Caco-2 (cell line): ENCODE measurements at regions of chr15 and their contacts with region 1.

Region 1: DNA sequence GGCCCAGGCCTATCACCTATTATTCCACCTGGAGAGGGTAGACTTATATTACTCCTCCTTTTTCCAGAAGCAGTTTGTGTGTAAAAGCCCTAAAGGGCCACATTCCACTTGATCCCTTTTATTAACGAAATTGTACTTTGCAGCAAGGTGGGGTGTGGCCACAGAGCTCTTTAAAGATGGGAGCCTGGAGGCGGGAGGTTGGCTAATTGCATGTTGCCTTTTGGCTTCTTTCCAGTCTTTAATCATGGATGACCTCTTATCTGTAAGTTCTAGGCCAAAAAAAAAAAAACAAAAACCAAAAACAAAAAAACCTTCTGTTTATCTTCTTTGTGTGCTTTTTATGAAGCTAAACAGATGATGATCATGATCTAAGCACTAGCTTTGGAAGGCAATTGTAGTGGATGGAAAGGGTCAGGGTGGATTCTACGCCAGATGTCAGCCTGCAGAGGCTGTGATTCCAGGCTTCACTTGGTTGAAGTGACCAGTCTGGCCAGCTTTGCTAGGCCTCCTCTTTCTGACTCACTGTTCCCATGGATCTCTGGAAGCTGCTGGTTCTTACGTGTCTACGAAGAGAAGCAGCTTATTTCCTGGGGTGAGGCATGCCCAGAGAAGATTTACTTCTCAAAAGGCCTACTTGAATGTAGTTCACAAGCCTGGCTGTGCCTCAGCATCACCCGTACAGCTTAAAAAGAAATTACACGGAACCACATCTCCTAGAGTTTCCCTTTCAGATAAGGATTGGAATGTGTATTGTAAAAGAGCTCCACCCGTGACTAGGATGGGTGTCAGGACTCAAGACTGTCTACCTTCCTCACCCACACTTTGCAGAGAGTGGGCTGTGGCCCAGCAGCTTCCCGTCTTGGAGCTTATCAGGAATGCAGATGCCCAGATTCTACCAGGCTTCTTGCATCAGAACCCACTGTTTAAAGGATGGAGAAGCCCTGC is 330.9 kb upstream of the C2CD4B start:
- DNase-seq: no peak
- H3K4me3 ChIP-seq: no peak overlapping the region
- H3K4me3 Mint-ChIP-seq: peak overlapping the region; percentile 15
- H3K27ac Mint-ChIP-seq: peak overlapping the region; percentile 39
- H3K4me1 ChIP-seq: peaks cover 73% of the 10 kb centered on the region
- H3K4me1 Mint-ChIP-seq: peaks cover 59% of the 10 kb centered on the region
- H3K27me3 ChIP-seq: no peaks in the 10 kb centered on the region
- H3K27me3 Mint-ChIP-seq: no peaks in the 10 kb centered on the region
- CTCF ChIP-seq: no peak

Region 2: GRCh38 chr15:62558640-62559380 is 62.9 kb after region 1 on chr15:
- CTCF ChIA-PET with region 1: no interaction called
- POLR2A ChIA-PET with region 1: no interaction called
- intact Hi-C with region 1: loop called (anchors 5 kb)
- DNase-seq: peak; percentile 49 to 59
- H3K4me3 ChIP-seq: no peak overlapping the region
- H3K4me3 Mint-ChIP-seq: peak overlapping the region; percentile 66
- H3K27ac Mint-ChIP-seq: peak overlapping the region; percentile 95
- H3K4me1 ChIP-seq: peaks cover 85% of the 10 kb centered on the region
- H3K4me1 Mint-ChIP-seq: peaks cover 43% of the 10 kb centered on the region
- H3K27me3 ChIP-seq: no peaks in the 10 kb centered on the region
- H3K27me3 Mint-ChIP-seq: no peaks in the 10 kb centered on the region
- CTCF ChIP-seq: no peak